Motor neuron (in vitro differentiated cells): ENCODE measurements at regions of chr9 and their contacts with region 1.

Region 1: DNA sequence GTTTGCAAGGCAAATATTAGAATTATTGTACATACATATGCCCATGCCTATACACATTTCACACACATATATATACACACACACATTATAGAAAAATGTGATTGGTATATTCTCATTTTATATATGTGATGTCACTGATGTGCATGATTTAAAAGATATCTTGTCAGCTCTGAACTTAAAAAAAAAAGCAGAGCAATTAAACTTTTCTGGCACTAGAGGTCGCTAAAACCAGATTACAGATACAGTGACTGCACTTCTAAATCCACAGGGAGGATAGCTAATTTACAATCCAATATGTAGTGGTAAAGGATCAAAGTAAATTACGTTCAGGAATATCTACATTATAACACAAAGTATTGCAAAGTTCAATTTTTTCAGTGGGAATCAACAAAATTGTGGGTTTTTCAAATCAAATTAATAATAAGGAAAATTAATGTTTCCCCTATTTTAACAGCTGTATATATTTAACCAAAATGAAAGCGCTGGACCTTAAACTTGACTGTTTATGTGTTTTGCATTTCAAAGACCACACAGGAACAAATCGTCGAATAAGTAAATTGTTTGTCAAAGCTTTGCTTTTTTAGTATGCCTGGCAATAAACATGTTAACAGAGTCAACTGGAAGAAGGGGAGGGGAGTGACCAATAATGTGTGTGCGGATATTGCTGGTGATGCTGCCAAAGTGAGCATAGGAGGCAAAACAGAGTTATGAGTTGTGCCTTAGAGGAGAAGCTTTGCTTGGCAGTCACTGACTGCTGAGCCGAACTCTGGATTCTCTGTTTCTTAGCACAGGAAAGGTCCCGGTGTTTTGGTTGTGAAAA is 1201.3 kb upstream of the C9orf72 start:
- ATAC-seq: peak in 5 of 8 experiments; percentile 19 to 50 (median 31)
- H3K4me3 ChIP-seq: no peak overlapping the region
- H3K27ac ChIP-seq: no peak overlapping the region
- H3K4me1 ChIP-seq: peaks cover 3 to 16% of the 10 kb centered on the region in 2 donors

Region 2: DNA sequence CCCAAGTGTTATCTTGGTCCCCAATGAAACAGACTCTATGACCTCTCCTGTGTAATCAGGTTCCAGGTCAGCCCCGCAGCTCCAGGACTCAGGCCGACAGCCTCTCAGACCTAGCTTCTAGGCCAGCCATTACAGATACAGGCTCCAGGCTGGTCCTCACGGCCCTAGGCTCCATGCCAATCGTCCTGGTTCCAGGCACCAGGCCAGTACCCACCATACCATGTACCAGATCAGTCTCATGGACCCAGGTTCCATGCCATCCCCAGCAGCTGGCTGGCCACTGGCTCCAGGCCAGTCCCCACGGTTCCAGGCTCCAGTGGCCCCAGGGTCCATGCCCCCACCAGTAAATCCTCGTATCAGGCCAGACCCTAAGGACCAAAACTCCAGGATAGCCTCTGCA is 125.3 kb after region 1 on chr9:
- in situ Hi-C with region 1: loop called in 1 of 9 experiments (anchors 25 kb)
- ATAC-seq: no peak
- H3K4me3 ChIP-seq: no peak overlapping the region
- H3K27ac ChIP-seq: no peak overlapping the region
- H3K4me1 ChIP-seq: no peaks in the 10 kb centered on the region